SK-N-SH (cell line): ENCODE measurements at regions of chr4 and their contacts with region 1.

Region 1: DNA sequence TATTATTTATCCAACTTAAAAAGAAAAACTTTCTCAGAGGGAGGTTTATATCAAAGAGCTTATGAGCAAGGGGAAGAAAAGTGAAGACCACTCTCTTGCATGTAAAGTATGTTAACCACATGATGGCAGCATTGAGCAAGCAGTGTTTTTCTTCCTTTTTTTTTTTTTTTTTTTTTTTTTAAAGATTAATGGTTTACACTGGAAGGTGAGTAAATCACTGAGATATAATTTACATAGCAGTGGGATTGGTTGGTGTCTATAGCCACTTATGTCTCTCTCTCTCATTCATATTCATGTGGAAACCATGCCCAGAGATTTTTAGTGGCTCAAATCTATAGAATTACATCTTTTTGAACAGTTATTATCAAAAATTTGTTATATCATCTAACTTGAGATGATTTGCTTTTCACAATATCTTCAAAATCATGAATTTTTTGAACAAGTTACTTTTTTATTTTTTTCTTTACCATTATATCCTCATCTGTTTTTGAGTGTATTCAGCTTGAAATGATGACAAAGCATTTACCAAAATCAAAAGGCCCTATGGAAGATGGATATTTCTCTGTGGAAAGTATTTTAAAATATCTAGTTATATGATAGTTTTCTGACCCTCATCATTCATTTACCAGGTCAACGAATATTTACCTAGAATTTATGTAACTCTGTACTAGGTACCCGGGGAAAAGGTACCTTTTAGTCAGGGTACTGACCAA is 31.6 kb downstream of the MTHFD2L start:
- DNase-seq: peak; percentile 22
- H3K4me3 ChIP-seq: no peak overlapping the region; a peak in 1 of 4 replicates
- H3K27ac ChIP-seq: no peak overlapping the region
- H3K4me1 ChIP-seq: no peaks in the 10 kb centered on the region
- H3K27me3 ChIP-seq: no peaks in the 10 kb centered on the region
- CTCF ChIP-seq: peak; percentile 75
- EP300 ChIP-seq: no peak
- RAD21 ChIP-seq: peak; percentile 67

Region 2: GRCh38 chr4:74157561-74158465 is 31.7 kb before region 1 on chr4 and contains the start of gene MTHFD2L:
- CTCF ChIA-PET with region 1: no interaction called
- POLR2A ChIA-PET with region 1: no interaction called
- DNase-seq: peak; percentile 98
- H3K4me3 ChIP-seq: peak within 1 kb of the TSS; percentile 70 to 90
- H3K27ac ChIP-seq: peak within 1 kb of the TSS; percentile 91 to 95
- H3K4me1 ChIP-seq: peaks cover 5 to 7% of the 10 kb centered on the region in 2 experiments; a peak in 3 of 4 replicates
- H3K27me3 ChIP-seq: no peaks in the 10 kb centered on the region
- CTCF ChIP-seq: no peak
- EP300 ChIP-seq: 0 out of 4 replicates have a peak, but pooled peaks of 1 of the 2 experiments have one; percentile 27
- RAD21 ChIP-seq: no peak
- polyA plus RNA-seq, gene MTHFD2L: 4.8 and 8.2 TPM in 2 replicates

Region 3: GRCh38 chr4:74174421-74174820 is 15.1 kb before region 1 on chr4:
- CTCF ChIA-PET with region 1: interaction called, 10 read pairs
- POLR2A ChIA-PET with region 1: no interaction called
- DNase-seq: no peak
- H3K4me3 ChIP-seq: no peak overlapping the region
- H3K27ac ChIP-seq: no peak overlapping the region
- H3K4me1 ChIP-seq: no peaks in the 10 kb centered on the region
- H3K27me3 ChIP-seq: no peaks in the 10 kb centered on the region
- CTCF ChIP-seq: no peak
- EP300 ChIP-seq: no peak
- RAD21 ChIP-seq: no peak

Region 4: GRCh38 chr4:74202062-74202586 is 12.6 kb after region 1 on chr4:
- CTCF ChIA-PET with region 1: interaction called, 11 read pairs
- POLR2A ChIA-PET with region 1: no interaction called
- DNase-seq: no peak
- H3K4me3 ChIP-seq: no peak overlapping the region
- H3K27ac ChIP-seq: no peak overlapping the region
- H3K4me1 ChIP-seq: no peaks in the 10 kb centered on the region
- H3K27me3 ChIP-seq: no peaks in the 10 kb centered on the region
- CTCF ChIP-seq: no peak
- EP300 ChIP-seq: no peak
- RAD21 ChIP-seq: no peak